ENCODE measurements at regions of chr11 and their contacts with region 1.

Region 1: DNA sequence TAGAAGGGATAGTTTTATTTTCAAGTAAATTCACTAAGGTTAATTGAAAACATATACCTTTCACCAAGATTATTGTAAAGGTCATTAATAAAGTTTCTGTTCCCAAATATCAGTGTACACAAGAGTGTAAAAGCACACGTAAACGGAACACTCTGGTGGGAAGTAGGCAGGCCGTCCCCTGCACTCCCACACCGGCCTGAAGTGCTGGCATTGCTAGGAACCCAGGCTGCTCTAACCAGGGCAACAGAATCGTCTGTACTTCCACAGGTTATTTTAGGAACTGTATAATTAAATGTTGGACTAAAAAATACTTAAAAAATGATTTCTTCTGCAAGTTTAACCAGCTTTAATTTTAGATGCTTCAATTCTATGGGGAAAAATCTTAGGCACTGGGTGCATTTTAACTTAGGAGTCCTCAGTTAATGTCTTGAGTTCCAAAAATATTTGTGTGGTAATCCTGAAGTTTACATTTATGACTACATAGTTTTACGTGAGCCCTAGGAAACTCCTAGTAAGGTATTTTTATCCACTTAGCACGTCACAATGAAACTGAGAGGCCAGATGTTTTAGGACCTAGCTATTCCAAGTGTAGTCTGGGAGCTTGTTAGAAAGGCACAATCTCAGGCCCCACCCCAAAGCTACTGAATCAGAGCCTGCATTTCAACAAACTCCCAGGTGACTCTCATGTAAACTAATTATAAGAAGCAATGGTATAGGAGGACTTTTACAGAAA is 31.2 kb downstream of the KMT5B start:
- DNase-seq: no peak
- ATAC-seq: no peak

Region 2: GRCh38 chr11:68076371-68077042 is 105.4 kb before region 1 on chr11:
- intact Hi-C with region 1: loop called (anchors 10 kb)
- DNase-seq: no peak
- ATAC-seq: no peak

Region 3: GRCh38 chr11:68121067-68121899 is 60.6 kb before region 1 on chr11 and contains the start of gene CHKA:
- intact Hi-C with region 1: no loop called
- DNase-seq: peak; percentile 96
- ATAC-seq: peak; percentile 96
- total RNA-seq, gene CHKA: 8.4 TPM

Measured in Right ventricle myocardium superior (tissue), 1 donor.